HepG2 (cell line): ENCODE measurements at regions of chr21 and their contacts with region 1.

Region 1: GRCh38 chr21:41283211-41283818 is 33.3 kb upstream of the FAM3B start:
- DNase-seq: peak; percentile 74
- ATAC-seq: peak; percentile 99
- H3K4me3 ChIP-seq: no peak overlapping the region
- H3K27ac ChIP-seq: no peak overlapping the region
- H3K4me1 ChIP-seq: no peaks in the 10 kb centered on the region
- H3K27me3 ChIP-seq: peaks cover 0 to 13% of the 10 kb centered on the region in 2 experiments; a peak in 2 of 5 replicates
- CTCF ChIP-seq: peak; percentile 92
- EP300 ChIP-seq: no peak
- POLR2A ChIP-seq: no peak
- RAD21 ChIP-seq: peak; percentile 86

Region 2: DNA sequence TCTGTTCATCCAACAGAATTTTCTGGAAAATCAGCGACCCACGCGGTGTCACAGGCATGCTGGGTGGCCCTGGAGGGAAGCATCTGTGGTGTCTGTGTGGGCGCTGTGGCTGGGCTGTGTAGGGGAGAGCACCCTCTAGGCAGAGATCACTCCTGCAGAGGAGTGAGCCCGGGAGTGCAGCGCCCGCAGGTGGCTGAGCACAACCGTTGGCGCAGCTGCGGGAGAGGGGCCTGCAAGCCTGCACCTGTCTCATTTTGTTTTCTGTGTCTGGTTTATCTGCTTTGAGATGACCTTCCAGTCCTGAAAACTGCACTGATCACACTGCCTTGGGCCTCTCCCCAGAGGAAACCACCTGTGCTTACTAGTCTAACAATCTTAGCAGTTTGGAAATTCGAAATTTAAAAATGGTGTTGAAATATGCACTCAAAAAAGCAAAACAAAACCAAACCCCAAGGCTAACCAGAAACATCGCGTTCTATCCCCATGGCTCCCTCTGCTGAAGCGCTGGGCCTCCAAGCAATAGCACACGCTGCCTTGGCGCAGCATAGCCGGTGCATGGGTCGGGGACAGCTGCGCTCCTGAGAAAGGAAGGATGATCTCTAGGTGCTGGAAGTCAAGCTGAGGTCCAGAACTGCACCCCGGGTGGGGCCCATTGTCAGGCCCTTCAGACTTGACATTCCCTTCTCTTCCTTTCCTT is 38.0 kb after region 1 on chr21:
- CTCF ChIA-PET with region 1: interaction called, 3 read pairs
- POLR2A ChIA-PET with region 1: interaction called, 23 read pairs
- in situ Hi-C with region 1: no loop called
- intact Hi-C with region 1: loop called (anchors 2 kb)
- DNase-seq: no peak
- ATAC-seq: peak; percentile 24
- H3K4me3 ChIP-seq: peak overlapping the region; percentile 32 to 69 (median 38); a peak in 5 of 6 replicates
- H3K27ac ChIP-seq: peak overlapping the region; percentile 96
- H3K4me1 ChIP-seq: peaks cover 91% of the 10 kb centered on the region
- H3K27me3 ChIP-seq: no peaks in the 10 kb centered on the region
- CTCF ChIP-seq: peak; percentile 63
- EP300 ChIP-seq: no peak
- POLR2A ChIP-seq: 0 out of 4 replicates have a peak, but pooled peaks of 1 of the 2 experiments have one; percentile 46
- RAD21 ChIP-seq: peak; percentile 47; the same call in 1 of the 2 replicates

Region 3: GRCh38 chr21:41361786-41362604 is 78.7 kb after region 1 on chr21 and contains the start of gene MX2:
- CTCF ChIA-PET with region 1: interaction called, 35 read pairs
- POLR2A ChIA-PET with region 1: interaction called, 14 read pairs
- in situ Hi-C with region 1: loop called (anchors 5 kb)
- intact Hi-C with region 1: loop called (anchors 1 kb)
- DNase-seq: peak; percentile 35
- ATAC-seq: peak; percentile 19
- H3K4me3 ChIP-seq: peak within 1 kb of the TSS; percentile 32 to 65 (median 41)
- H3K27ac ChIP-seq: peak within 1 kb of the TSS; percentile 15
- H3K4me1 ChIP-seq: peaks cover 64% of the 10 kb centered on the region
- H3K27me3 ChIP-seq: no peaks in the 10 kb centered on the region
- CTCF ChIP-seq: no peak
- EP300 ChIP-seq: no peak
- POLR2A ChIP-seq: no peak; a peak in 1 of 4 replicates
- RAD21 ChIP-seq: no peak
- total RNA-seq, gene MX2: 35.7 and 46.9 TPM in 2 replicates

Region 4: DNA sequence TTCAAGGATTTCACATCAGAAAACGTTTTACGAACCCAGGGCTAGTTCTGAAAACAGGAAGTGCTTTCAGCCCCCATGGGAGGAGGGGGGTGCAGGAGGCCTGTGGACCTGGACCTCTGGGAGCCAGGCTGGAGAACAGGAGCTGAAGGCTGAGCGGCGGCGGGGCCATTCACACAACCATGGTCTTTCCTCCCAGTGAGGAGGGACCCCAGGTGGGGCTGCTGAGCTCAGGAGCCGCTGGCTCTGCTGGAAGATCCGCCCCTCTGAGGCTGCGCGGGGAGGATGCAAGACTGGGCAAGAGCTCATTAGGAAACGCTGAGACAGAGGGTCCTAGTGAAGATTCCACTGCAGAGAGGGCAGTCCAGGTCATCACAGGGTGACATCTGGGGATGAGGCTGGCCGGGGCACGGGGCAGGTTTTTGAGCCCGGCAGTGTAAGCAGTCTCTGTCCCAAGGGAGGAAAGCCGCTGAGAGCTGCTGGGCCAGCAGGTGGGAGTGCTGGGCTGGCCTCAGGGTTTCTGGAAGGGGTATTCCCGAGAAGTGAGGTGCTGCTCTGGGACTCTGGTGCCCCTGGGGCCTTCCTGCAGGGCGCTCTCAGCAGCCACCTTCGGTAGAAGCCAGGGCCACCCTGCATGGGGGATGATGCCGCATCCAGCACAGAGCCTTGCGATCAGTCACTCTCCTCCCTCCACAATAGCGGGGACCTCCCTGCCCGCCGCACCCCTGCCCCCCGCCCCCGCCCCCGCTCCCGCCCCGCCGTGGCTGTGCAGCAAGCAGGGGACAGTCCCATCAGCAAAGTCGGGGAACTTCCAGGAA is 86.0 kb after region 1 on chr21:
- CTCF ChIA-PET with region 1: no interaction called
- POLR2A ChIA-PET with region 1: interaction called, 15 read pairs
- in situ Hi-C with region 1: loop called (anchors 5 kb)
- intact Hi-C with region 1: no loop called
- DNase-seq: peak; percentile 40
- ATAC-seq: peak; percentile 76
- H3K4me3 ChIP-seq: peak overlapping the region; percentile 57 to 73 (median 67); a peak in 5 of 6 replicates
- H3K27ac ChIP-seq: peak overlapping the region; percentile 68
- H3K4me1 ChIP-seq: peaks cover 56% of the 10 kb centered on the region
- H3K27me3 ChIP-seq: no peaks in the 10 kb centered on the region; a peak in 1 of 5 replicates
- CTCF ChIP-seq: peak; percentile 52
- EP300 ChIP-seq: no peak
- POLR2A ChIP-seq: no peak; a peak in 1 of 4 replicates
- RAD21 ChIP-seq: peak; percentile 30

Region 5: DNA sequence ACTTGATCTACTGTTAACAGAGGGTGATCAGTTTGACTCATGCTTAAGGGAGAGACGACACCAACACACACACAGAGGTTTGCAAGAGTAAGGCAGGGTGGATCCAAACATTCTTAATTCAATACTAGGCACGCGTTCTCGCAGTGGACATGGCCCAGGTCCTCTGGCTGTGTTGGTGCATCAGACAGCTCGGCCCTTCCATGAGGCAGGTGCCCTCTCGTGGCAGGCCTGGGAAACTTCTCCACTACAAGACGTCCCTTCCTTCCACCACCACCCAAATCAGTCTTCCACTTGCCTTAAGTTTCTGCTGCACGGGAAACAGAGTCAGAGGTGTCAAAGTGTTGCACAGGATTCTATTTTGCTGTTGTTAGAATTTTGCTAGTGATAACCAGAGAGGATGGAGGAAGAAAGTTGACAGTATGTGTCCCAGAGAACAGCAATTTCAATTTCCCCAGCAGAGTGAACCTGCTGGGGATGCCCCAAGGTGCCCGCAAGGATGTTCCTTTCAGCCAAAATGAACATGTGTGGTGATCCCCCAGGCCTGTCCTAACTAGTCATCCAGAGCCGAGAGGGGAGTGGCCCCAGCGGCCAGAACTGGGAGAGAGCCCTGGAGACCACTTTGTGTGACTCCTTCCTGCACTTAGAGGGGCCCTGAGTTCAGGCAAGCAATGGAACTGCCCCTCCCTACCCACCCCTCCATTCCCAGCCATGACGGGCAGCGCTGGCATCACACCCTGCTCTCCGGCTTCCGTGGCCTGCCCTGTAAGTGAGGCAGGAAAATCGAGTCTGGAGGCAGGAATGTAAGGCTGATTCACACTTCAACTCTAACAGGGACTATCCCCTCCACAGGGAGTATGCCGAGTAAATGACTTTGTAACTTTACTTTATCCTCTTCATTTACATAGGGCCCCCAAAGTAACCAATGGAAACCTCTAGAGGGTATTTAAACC is 177.5 kb after region 1 on chr21:
- CTCF ChIA-PET with region 1: interaction called, 30 read pairs
- POLR2A ChIA-PET with region 1: interaction called, 7 read pairs
- in situ Hi-C with region 1: loop called (anchors 5 kb)
- intact Hi-C with region 1: loop called (anchors 1 kb)
- DNase-seq: peak; percentile 54
- ATAC-seq: peak; percentile 98
- H3K4me3 ChIP-seq: no peak overlapping the region
- H3K27ac ChIP-seq: no peak overlapping the region
- H3K4me1 ChIP-seq: peaks cover 12% of the 10 kb centered on the region
- H3K27me3 ChIP-seq: no peaks in the 10 kb centered on the region
- CTCF ChIP-seq: peak; percentile 91
- EP300 ChIP-seq: no peak
- POLR2A ChIP-seq: no peak
- RAD21 ChIP-seq: peak; percentile 58

Region 6: GRCh38 chr21:41601573-41602368 is 318.5 kb after region 1 on chr21:
- CTCF ChIA-PET with region 1: no interaction called
- POLR2A ChIA-PET with region 1: no interaction called
- in situ Hi-C with region 1: no loop called
- intact Hi-C with region 1: loop called (anchors 10 kb)
- DNase-seq: no peak
- ATAC-seq: no peak
- H3K4me3 ChIP-seq: no peak overlapping the region
- H3K27ac ChIP-seq: no peak overlapping the region
- H3K4me1 ChIP-seq: peaks cover 54% of the 10 kb centered on the region
- H3K27me3 ChIP-seq: peaks cover 0 to 1% of the 10 kb centered on the region in 2 experiments; a peak in 1 of 5 replicates
- CTCF ChIP-seq: no peak
- EP300 ChIP-seq: no peak
- POLR2A ChIP-seq: no peak
- RAD21 ChIP-seq: no peak